ENCODE measurements at regions of chr15 and their contacts with region 1.

Region 1: GRCh38 chr15:83848315-83849050 is 194.6 kb downstream of the ADAMTSL3 start:
- DNase-seq: no peak

Region 2: DNA sequence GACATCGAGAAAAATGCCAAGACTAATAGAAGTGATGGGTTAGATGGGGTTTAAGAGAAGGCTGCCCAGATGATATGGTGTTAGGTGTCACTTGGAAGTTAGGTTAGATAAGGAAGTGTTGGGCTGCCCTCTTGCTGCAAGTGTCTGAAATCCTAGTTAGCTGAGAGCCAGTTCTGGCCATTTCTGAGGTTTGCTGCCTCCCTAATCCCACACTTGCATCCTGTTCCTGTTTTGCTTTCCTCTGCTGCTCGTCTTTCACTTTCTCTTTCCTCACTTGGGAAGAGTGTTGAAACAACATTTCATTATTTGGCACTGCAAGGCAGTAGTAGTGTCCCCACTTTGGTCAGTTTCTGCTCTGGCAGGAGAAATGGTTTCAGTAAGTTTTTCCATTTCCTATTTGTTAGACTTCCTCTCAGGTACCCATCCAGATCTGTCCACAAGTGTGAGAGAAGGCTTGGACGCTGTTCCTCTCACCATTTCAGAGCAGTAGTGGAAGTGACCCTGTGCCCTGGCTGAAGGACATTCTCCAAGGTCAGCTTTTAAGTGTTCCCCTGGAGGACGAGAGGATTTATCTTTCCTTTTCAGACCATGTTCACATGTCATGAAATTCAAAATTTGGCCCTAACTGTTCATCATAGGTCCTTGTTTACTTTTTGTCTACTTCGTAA is 101.3 kb before region 1 on chr15:
- intact Hi-C with region 1: loop called (anchors 5 kb)
- DNase-seq: no peak

Region 3: DNA sequence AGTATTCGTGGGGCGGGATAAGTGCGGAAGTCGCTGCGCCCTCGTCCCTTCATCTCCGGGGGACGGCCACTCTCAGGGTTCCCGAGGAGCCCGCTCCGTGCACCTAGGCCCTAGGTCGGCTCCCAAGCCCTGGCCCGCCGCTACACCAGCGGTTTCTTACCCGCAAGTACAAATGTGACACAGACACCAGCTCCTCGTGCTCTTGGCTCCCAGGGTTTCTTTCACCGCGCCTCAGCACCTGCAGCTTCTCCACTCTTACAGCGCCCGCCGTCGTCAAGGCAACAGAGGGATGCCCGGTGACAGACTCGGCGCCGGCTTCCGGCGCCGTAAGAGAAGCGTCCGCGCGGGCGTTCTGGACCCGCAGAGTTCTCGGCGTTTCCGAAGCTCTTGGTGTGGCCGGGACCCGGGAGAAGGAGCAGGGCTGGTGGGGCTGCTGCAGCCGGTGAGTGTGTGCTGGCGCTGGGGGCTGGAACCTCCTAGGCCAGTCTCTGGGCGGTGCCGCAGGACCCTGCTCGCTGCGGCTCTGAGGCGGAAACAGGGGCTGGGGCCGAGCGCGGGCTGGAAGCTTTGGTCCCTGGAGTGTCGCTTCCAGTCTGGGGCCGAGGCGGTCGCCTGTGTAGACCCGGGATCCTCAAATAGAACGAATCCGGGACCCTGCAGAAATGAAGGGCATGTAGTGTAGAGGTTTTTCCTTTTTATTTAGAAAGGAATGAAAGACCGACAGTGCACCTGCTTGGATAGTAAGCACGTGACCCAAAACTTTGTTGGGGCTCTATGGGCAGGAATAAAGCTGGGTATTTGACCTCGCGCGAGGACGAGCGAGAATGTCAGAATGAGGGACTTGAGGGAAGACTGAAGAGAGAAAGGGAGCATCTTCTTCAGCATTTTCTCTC is 231.6 kb after region 1 on chr15:
- intact Hi-C with region 1: no loop called
- DNase-seq: no peak

Measured in cardiac septum (tissue), 1 donor.